Activated CD4-positive, alpha-beta T cell treated with anti-CD3 and anti-CD28 coated beads, Interleukin-2, amount 10 ng/mL, durations not matched to agents 24 days and 14 days (primary cell): ENCODE measurements at regions of chr20 and their contacts with region 1.

Region 1: DNA sequence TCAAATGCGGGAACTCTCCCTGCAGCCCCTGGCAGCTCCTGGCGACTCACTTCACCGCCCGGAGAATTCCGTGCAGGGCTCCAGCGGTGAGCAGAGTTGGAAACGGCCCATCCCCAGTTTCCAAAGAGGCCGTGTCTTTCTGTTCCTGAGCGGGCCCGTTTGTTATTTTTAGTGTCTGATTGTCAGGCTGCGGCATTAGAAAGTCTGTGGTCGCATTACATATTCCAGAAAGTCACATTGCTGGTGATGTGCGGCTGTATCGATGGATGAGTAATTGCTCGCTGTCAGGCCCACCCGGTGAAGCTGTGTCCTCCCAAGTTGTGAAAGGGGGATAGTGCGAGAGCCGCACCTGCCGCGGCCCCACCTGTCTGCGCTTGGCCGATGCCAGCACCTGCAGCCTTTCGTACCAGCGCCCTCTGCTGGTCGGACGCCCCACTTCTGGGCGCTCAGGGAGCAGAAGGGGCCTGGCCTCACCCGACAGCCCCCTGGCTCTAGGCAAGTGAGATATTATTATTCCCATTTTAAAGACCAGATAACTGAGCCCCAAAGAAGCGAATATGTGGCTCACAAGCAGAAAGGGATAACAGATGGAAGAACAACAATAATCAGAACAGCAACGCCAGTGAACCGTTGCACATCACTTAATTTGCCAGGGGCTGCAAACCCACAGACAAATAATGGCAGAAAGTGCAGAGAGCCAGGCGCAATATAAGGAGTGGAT is 244.9 kb downstream of the TSHZ2 start:
- DNase-seq: peak; percentile 94
- H3K4me3 Mint-ChIP-seq: peak overlapping the region; percentile 70
- H3K27ac Mint-ChIP-seq: peak overlapping the region; percentile 72
- H3K4me1 Mint-ChIP-seq: peaks cover 31% of the 10 kb centered on the region
- H3K27me3 Mint-ChIP-seq: no peaks in the 10 kb centered on the region

Region 2: DNA sequence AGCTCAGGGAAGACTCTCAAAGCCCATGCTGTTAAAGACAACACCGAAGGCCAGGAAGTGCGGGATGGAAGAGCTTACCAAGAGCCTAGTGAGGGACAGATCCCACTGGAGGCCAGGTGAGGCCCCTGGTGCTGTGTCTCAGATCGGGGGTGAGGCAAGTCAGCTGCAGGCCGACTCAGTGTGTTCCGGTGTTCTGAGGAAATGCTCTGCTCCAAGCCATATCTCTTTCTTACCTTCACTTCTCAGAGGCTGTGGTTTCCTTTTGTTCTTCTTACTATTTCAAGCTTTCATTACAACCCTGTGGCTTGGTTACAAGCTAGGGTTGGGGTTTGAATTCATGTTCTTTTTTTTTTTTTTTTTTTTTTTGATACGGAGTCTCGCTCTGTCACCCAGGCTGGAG is 911.2 kb before region 1 on chr20:
- intact Hi-C with region 1: loop called (anchors 10 kb)
- DNase-seq: peak; percentile 76
- H3K4me3 Mint-ChIP-seq: peak overlapping the region; percentile 6
- H3K27ac Mint-ChIP-seq: peak overlapping the region; percentile 59
- H3K4me1 Mint-ChIP-seq: peaks cover 20% of the 10 kb centered on the region
- H3K27me3 Mint-ChIP-seq: peaks cover 2% of the 10 kb centered on the region

Region 3: GRCh38 chr20:53028337-53029007 is 188.5 kb before region 1 on chr20:
- intact Hi-C with region 1: loop called (anchors 2 kb)
- DNase-seq: no peak
- H3K4me3 Mint-ChIP-seq: peak overlapping the region; percentile 37
- H3K27ac Mint-ChIP-seq: peak overlapping the region; percentile 86
- H3K4me1 Mint-ChIP-seq: peaks cover 52% of the 10 kb centered on the region
- H3K27me3 Mint-ChIP-seq: no peaks in the 10 kb centered on the region

Region 4: GRCh38 chr20:53077373-53078205 is 139.4 kb before region 1 on chr20:
- intact Hi-C with region 1: loop called (anchors 2 kb)
- DNase-seq: peak; percentile 68
- H3K4me3 Mint-ChIP-seq: no peak overlapping the region
- H3K27ac Mint-ChIP-seq: no peak overlapping the region
- H3K4me1 Mint-ChIP-seq: peaks cover 37% of the 10 kb centered on the region
- H3K27me3 Mint-ChIP-seq: no peaks in the 10 kb centered on the region

Region 5: GRCh38 chr20:53195876-53196610 is 21.0 kb before region 1 on chr20:
- intact Hi-C with region 1: no loop called
- DNase-seq: no peak
- H3K4me3 Mint-ChIP-seq: no peak overlapping the region
- H3K27ac Mint-ChIP-seq: no peak overlapping the region
- H3K4me1 Mint-ChIP-seq: peaks cover 4% of the 10 kb centered on the region
- H3K27me3 Mint-ChIP-seq: no peaks in the 10 kb centered on the region

Region 6: GRCh38 chr20:53547664-53548239 is 330.7 kb after region 1 on chr20:
- intact Hi-C with region 1: loop called (anchors 5 kb)
- DNase-seq: peak; percentile 84
- H3K4me3 Mint-ChIP-seq: no peak overlapping the region
- H3K27ac Mint-ChIP-seq: no peak overlapping the region
- H3K4me1 Mint-ChIP-seq: no peaks in the 10 kb centered on the region
- H3K27me3 Mint-ChIP-seq: no peaks in the 10 kb centered on the region

Region 7: DNA sequence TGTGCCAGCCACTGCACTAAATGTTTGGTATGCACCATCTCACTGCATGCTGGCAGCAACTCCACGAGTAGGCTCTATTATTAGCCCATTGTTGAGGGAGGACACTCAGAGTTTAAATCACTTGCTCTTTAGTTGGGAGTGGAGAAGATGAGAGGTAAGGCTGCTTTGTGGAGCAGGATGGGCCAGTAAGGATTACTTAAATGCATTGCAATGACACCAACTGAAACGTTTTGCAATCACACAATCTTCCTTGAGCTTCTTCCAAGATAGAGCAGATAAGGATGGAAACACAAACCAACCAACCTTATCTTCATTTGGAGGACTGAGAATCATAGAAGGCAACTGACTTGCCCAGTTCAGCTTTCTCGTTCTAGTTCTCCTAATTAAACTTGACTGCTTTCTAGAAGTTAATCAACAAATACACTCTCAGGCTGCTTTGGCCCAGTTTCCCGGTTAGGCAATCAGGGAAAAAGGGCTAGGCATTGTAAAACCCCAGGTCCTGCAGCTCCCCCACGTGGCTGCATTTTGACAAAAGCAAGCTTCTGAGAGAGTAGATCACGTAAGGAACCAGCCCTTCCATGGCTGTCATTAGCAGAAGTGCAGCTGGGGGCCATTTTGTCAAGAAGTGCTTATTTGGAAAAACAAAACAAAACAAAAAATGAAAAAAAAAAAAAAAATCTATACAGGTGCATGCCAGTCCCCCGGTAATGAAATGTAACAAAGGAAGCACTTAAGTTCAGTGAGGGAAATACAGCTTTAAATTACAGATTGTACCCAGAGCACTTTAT is 722.8 kb after region 1 on chr20:
- intact Hi-C with region 1: loop called (anchors 10 kb)
- DNase-seq: peak; percentile 91
- H3K4me3 Mint-ChIP-seq: no peak overlapping the region
- H3K27ac Mint-ChIP-seq: peak overlapping the region; percentile 8
- H3K4me1 Mint-ChIP-seq: peaks cover 45% of the 10 kb centered on the region
- H3K27me3 Mint-ChIP-seq: no peaks in the 10 kb centered on the region